Activated CD4-positive, alpha-beta T cell treated with anti-CD3 and anti-CD28 coated beads for 36 hours (primary cell): ENCODE measurements at regions of chr3 and their contacts with region 1.

Region 1: GRCh38 chr3:157606011-157606851 is 103.0 kb upstream of the VEPH1 start:
- DNase-seq: peak; percentile 82
- ATAC-seq: peak; percentile 94
- H3K4me3 Mint-ChIP-seq: no peak overlapping the region
- H3K27ac Mint-ChIP-seq: no peak overlapping the region
- H3K4me1 Mint-ChIP-seq: peaks cover 5% of the 10 kb centered on the region
- H3K27me3 Mint-ChIP-seq: peaks cover 13% of the 10 kb centered on the region

Region 2: DNA sequence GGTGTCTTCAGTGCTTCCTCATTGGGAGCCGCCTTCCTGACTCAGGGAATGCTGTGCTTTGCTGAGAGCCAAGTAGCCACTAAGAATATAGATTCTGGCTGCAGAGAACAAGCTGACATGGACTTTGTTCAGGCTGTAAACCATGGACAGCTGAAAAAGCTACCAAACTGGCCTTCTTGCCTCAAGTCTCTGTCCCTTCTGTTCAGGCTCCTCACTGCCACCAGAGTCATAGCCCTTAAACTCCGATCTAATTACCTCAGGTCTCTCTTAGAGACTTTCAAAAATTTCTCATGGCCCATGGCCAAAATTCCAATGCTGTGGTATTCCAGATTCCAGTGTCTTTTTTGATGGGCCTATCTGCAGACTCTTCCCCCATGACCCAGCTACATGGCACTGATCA is 189.0 kb before region 1 on chr3:
- CTCF ChIA-PET with region 1: no interaction called
- POLR2A ChIA-PET with region 1: no interaction called
- intact Hi-C with region 1: no loop called
- DNase-seq: no peak
- ATAC-seq: no peak
- H3K4me3 Mint-ChIP-seq: no peak overlapping the region
- H3K27ac Mint-ChIP-seq: no peak overlapping the region
- H3K4me1 Mint-ChIP-seq: no peaks in the 10 kb centered on the region
- H3K27me3 Mint-ChIP-seq: no peaks in the 10 kb centered on the region

Region 3: DNA sequence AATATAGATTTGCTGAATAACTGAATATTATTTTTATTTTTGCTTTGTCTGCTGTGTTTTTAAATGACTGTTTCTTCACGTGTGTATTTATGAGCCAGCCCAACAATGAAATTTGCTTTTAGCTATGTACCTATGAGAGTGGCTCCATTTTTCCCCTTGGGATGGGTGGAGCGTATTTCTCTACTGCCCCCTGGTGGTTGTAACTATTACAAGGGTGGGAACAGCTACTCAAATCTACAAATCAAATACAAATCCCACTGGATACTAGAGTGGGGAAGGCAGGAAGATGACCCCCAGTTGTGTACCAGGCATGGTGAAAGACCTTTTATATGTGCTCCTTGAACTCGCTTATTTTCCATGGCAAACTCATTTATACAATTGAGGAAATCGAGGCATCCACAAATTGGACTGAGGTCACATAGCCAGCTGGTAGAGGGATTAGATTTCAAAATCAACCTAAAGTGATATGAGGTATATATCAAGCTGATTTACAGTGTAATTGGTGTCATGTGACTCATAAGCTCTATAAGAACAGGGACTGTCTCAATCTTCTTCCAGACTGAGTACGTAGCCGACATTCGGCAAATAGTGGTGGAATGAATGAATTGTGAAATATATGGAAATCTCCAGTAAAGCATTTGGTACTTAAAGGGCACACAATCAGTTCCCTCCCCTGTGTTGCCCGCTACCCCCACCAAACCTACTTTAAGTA is 33.5 kb before region 1 on chr3:
- CTCF ChIA-PET with region 1: interaction called, 10 read pairs
- POLR2A ChIA-PET with region 1: no interaction called
- intact Hi-C with region 1: no loop called
- DNase-seq: peak; percentile 37
- ATAC-seq: no peak
- H3K4me3 Mint-ChIP-seq: no peak overlapping the region
- H3K27ac Mint-ChIP-seq: no peak overlapping the region
- H3K4me1 Mint-ChIP-seq: no peaks in the 10 kb centered on the region
- H3K27me3 Mint-ChIP-seq: peaks cover 15% of the 10 kb centered on the region

Region 4: DNA sequence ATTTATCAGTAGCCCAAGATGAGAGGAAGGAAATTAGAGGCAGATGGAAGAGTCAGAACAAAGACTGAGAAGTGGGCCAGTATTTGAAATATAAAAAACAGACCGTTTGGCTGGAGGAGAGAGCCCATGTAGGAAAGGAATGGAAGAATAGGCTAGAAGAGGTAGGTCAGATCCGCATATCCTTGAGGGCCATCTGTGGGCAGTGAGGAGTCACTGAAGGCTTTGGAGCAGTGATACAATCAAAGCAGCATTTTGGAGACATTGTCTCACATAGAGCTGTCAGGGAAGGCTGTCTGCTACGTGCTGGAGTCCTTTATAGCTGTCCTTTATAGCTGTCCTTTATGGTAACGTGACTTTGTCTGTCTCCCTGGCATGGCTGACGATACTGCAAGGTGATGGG is 11.0 kb before region 1 on chr3:
- CTCF ChIA-PET with region 1: interaction called, 23 read pairs
- POLR2A ChIA-PET with region 1: no interaction called
- intact Hi-C with region 1: no loop called
- DNase-seq: no peak
- ATAC-seq: no peak
- H3K4me3 Mint-ChIP-seq: no peak overlapping the region
- H3K27ac Mint-ChIP-seq: no peak overlapping the region
- H3K4me1 Mint-ChIP-seq: no peaks in the 10 kb centered on the region
- H3K27me3 Mint-ChIP-seq: peaks cover 12% of the 10 kb centered on the region

Region 5: DNA sequence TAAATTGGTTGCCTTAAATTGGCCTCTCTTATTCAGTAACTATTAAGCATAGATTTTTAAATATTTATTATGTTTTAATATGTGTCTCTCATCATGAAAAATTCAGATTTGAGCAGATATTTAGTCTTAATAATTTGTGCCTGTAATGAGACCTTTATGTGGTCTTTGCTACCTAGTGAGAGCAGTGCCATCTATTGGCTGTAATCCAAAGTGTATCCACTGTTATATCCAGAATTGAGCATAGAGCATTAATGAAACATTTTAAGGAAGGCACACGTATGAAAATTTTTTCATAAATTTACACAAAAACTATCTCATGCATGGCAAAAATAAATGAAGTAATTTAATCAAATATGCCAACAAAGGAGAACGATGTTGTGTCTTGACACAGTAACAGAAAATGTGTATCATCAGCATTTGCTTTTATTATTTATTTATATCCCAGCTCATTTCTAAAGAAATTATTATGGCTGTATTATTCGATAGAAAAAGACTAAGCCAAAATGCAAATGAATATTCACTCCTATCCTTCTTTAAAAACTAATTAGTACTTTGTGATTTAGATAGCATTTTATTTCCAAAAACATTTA is 707.2 kb after region 1 on chr3:
- CTCF ChIA-PET with region 1: no interaction called
- POLR2A ChIA-PET with region 1: no interaction called
- intact Hi-C with region 1: loop called in 1 of 2 experiments (anchors 5 kb)
- DNase-seq: no peak
- ATAC-seq: no peak
- H3K4me3 Mint-ChIP-seq: no peak overlapping the region
- H3K27ac Mint-ChIP-seq: no peak overlapping the region
- H3K4me1 Mint-ChIP-seq: no peaks in the 10 kb centered on the region
- H3K27me3 Mint-ChIP-seq: no peaks in the 10 kb centered on the region